PC-9 (cell line): ENCODE measurements at regions of chr3 and their contacts with region 1.

Region 1: GRCh38 chr3:168871676-168872075 is 776.0 kb upstream of the GOLIM4 start:
- DNase-seq: no peak
- H3K4me3 ChIP-seq: no peak overlapping the region
- H3K27ac ChIP-seq: no peak overlapping the region
- H3K4me1 ChIP-seq: peaks cover 23% of the 10 kb centered on the region
- H3K27me3 ChIP-seq: no peaks in the 10 kb centered on the region
- CTCF ChIP-seq: no peak

Region 2: DNA sequence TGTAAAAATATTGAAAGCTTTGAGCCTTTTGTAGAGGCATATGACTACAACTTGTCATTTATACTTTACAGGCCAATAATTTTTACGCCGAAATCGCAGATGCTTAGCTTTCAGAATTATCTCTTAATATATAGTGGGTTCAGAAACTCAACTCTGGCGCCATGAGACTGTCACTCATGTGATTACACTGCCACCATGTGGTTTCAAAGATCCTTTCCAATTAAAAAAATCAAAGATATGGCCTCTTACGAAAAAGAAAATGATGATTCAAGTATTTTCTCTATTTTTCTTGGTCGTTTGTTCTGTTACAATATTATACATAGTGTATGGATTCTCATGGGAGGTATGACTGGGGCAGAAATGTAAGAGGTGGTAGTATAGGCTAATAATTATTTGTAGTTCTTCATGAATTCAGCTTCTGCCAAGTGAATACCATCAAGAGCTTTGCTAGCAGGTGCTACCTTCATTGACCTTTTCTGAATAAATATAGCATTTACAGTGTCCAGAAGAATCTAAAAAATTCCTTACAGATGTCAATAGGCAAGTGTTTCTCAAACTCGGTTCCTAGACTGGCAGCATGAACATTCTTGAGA is 24.3 kb before region 1 on chr3:
- CTCF ChIA-PET with region 1: no interaction called
- POLR2A ChIA-PET with region 1: no interaction called
- intact Hi-C with region 1: no loop called
- DNase-seq: peak in 1 of 2 experiments; percentile 38
- H3K4me3 ChIP-seq: no peak overlapping the region; the same call in 1 of the 2 replicates
- H3K27ac ChIP-seq: no peak overlapping the region
- H3K4me1 ChIP-seq: no peaks in the 10 kb centered on the region
- H3K27me3 ChIP-seq: peaks cover 19% of the 10 kb centered on the region; the same call in 1 of the 2 replicates
- CTCF ChIP-seq: peak; percentile 89

Region 3: DNA sequence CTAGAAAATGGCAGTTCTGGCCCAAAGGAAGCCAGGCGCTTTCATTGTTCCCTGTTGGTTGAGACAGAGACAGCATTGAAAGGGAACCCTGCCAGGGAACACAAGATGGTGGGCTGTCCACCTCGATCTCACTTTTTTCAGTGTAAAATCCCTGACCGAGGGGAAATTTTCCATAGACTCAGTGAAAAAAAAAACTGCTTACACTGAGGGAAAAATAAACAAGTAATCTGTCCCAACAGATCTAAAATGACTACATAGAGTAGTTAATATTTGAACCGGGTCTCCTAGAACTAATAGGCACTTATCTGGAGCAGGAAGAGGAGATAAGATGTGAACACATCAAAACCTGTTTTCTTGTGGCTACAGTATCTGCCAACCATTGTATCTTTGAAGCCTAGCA is 12.5 kb before region 1 on chr3:
- CTCF ChIA-PET with region 1: no interaction called
- POLR2A ChIA-PET with region 1: interaction called, 12 read pairs
- intact Hi-C with region 1: no loop called
- DNase-seq: no peak
- H3K4me3 ChIP-seq: no peak overlapping the region
- H3K27ac ChIP-seq: no peak overlapping the region
- H3K4me1 ChIP-seq: no peaks in the 10 kb centered on the region
- H3K27me3 ChIP-seq: no peaks in the 10 kb centered on the region
- CTCF ChIP-seq: no peak